ENCODE measurements at regions of chr11 and their contacts with region 1.

Region 1: DNA sequence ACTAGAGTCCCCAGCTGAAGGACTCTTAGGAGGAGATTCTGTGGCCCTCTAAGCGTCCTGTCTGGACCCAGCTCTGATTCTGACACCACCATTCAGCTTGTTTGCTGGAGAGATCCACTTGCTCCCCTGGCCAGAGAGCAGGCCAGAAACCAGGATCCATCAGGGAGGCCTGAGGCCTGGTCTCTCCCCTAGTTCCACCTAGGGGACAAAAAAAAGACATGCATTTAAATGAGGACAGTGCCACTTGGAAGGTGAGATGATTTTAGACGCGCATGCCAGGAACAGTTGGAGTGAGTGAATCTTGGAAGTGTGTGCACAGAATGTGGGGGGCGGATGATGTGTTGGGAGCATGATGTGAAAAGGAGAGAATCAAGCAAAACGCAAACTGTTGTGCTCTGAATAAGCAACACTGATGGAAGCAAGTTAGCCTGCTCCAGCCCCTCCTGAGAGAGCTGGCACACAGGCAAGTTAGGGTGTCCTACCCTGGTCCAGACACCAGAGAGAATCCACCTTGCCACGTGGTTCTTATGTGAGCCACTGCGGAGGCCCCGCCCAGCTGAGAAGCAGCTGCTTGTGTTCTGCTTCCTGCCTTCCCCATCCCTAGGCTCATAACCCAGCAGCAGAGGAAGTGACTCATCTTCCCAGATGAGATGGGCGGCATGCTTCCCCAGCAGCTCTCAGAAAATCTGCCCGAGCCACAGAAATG is 8.0 kb upstream of the SLCO2B1 start:
- DNase-seq: peak; percentile 92
- ATAC-seq: peak; percentile 90
- H3K4me3 Mint-ChIP-seq: peak overlapping the region; percentile 22
- H3K27ac Mint-ChIP-seq: peak overlapping the region; percentile 76
- H3K4me1 Mint-ChIP-seq: peaks cover 54% of the 10 kb centered on the region
- H3K27me3 Mint-ChIP-seq: peaks cover 35% of the 10 kb centered on the region

Region 2: DNA sequence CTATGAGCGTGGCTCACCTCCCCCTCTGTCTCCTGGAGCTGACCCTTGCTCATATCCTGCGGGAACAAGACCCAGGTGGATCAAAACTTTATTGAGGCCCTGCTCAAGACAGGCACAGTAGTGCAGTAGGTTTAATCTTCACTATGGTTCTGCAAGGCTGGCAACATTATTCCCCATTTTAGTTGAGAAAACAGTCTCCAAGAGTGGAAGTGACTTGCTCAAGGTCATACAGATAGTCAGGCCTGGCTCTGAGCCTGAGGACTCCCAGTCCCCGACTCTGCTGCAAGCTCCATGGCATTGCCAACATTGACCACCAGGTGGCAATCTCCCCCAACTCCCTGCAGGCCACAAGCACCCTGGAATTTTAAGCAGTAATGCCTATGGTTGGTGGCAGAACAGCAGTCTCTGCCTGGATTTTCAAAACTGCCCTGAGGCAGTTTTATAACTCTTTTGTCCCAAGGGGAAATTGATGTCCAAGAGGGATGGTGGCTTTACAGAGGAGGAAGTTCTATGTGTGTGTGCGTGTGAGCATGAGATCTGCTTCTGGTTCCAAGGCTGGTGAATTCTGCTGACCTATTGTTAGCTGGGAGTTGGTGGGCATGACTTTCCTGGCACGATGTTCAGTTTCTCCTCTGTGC is 120.0 kb before region 1 on chr11:
- CTCF ChIA-PET with region 1: interaction called, 23 read pairs
- DNase-seq: peak; percentile 81
- ATAC-seq: peak; percentile 94
- H3K4me3 Mint-ChIP-seq: no peak overlapping the region
- H3K27ac Mint-ChIP-seq: no peak overlapping the region
- H3K4me1 Mint-ChIP-seq: no peaks in the 10 kb centered on the region
- H3K27me3 Mint-ChIP-seq: no peaks in the 10 kb centered on the region

Region 3: GRCh38 chr11:75078233-75078632 is 64.6 kb before region 1 on chr11:
- CTCF ChIA-PET with region 1: no interaction called
- DNase-seq: no peak
- ATAC-seq: no peak
- H3K4me3 Mint-ChIP-seq: no peak overlapping the region
- H3K27ac Mint-ChIP-seq: no peak overlapping the region
- H3K4me1 Mint-ChIP-seq: no peaks in the 10 kb centered on the region
- H3K27me3 Mint-ChIP-seq: peaks cover 42% of the 10 kb centered on the region

Region 4: GRCh38 chr11:75174781-75175370 is 32.0 kb after region 1 on chr11:
- CTCF ChIA-PET with region 1: interaction called, 17 read pairs
- DNase-seq: peak; percentile 78
- ATAC-seq: peak; percentile 93
- H3K4me3 Mint-ChIP-seq: no peak overlapping the region
- H3K27ac Mint-ChIP-seq: peak overlapping the region; percentile 40
- H3K4me1 Mint-ChIP-seq: peaks cover 17% of the 10 kb centered on the region
- H3K27me3 Mint-ChIP-seq: peaks cover 27% of the 10 kb centered on the region

Region 5: DNA sequence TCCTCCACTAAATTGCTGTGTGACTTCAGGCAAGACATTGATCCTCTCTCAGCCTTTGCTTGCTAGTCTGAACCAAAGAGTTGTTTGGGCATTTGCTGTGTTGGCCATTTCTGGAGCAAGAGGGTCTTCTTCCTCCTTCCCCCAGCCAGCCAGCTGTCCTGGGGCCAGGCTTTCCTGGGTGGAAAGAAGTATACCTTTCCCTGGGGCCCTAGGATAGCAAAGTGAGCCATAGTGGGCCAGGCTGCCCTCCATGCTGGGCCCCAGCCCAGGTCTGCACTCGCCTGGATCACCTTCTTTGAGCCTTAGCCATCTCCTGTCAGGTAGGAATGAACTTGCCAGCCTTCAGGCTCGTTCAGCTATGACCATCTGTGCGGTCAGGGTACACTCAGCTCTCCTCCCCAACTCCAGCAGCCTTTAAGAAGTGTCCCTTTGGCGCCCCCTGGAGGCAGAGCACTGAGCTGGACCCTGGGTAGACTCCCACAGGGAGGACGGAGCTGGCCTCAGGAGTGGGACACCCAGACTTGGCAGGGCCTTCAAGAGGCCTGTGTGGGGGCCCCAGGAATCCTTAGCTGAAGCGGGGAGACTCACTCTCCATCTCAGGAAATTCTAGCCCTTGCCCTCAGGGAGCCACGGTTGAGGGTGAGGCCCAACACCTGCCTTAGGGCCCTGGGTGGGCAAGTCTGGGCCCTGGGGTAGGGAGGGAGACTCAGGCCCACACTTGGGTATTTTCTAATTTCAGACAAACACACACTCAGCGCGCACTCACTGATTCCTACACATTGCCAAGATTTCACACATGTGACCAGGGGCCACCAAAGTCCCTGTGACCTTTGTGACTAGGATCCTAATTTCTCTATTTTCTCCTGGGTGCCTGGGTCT is 62.1 kb after region 1 on chr11:
- CTCF ChIA-PET with region 1: interaction called, 556 read pairs
- DNase-seq: peak; percentile 90
- ATAC-seq: peak; percentile 97
- H3K4me3 Mint-ChIP-seq: no peak overlapping the region
- H3K27ac Mint-ChIP-seq: no peak overlapping the region
- H3K4me1 Mint-ChIP-seq: no peaks in the 10 kb centered on the region
- H3K27me3 Mint-ChIP-seq: peaks cover 19% of the 10 kb centered on the region

Region 6: DNA sequence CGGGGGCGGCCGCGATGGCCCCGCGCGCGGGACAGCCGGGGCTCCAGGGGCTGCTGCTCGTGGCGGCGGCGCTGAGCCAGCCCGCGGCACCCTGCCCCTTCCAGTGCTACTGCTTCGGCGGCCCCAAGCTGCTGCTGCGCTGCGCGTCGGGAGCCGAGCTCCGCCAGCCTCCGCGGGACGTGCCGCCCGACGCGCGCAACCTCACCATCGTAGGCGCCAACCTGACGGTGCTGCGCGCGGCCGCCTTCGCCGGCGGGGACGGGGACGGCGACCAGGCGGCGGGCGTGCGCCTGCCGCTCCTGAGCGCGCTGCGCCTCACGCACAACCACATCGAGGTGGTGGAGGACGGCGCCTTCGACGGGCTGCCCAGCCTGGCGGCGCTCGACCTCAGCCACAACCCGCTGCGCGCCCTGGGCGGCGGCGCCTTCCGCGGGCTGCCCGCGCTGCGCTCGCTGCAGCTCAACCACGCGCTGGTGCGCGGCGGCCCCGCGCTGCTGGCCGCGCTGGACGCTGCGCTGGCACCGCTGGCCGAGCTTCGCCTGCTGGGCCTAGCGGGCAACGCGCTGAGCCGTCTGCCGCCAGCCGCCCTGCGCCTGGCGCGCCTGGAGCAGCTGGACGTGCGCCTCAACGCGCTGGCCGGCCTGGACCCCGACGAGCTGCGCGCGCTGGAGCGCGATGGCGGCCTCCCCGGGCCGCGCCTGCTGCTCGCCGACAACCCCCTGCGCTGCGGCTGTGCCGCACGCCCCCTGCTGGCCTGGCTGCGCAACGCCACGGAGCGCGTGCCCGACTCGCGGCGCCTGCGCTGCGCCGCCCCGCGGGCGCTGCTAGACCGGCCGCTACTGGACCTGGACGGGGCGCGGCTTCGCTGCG is 98.4 kb after region 1 on chr11:
- CTCF ChIA-PET with region 1: interaction called, 572 read pairs
- DNase-seq: peak; percentile 88
- ATAC-seq: peak; percentile 97
- H3K4me3 Mint-ChIP-seq: peak overlapping the region; percentile 63
- H3K27ac Mint-ChIP-seq: no peak overlapping the region
- H3K4me1 Mint-ChIP-seq: peaks cover 9% of the 10 kb centered on the region
- H3K27me3 Mint-ChIP-seq: peaks cover 71% of the 10 kb centered on the region